ENCODE measurements at regions of chr20 and their contacts with region 1.

Region 1: GRCh38 chr20:2651772-2652723 is at the start of gene NOP56:
- DNase-seq: peak; percentile 68
- H3K4me3 ChIP-seq: peak within 1 kb of the TSS; percentile 99
- H3K27ac ChIP-seq: peak within 1 kb of the TSS; percentile 78
- H3K27me3 ChIP-seq: no peaks in the 10 kb centered on the region
- CTCF ChIP-seq: no peak
- polyA plus RNA-seq, gene NOP56: 126 and 142 TPM in 2 replicates

Region 2: DNA sequence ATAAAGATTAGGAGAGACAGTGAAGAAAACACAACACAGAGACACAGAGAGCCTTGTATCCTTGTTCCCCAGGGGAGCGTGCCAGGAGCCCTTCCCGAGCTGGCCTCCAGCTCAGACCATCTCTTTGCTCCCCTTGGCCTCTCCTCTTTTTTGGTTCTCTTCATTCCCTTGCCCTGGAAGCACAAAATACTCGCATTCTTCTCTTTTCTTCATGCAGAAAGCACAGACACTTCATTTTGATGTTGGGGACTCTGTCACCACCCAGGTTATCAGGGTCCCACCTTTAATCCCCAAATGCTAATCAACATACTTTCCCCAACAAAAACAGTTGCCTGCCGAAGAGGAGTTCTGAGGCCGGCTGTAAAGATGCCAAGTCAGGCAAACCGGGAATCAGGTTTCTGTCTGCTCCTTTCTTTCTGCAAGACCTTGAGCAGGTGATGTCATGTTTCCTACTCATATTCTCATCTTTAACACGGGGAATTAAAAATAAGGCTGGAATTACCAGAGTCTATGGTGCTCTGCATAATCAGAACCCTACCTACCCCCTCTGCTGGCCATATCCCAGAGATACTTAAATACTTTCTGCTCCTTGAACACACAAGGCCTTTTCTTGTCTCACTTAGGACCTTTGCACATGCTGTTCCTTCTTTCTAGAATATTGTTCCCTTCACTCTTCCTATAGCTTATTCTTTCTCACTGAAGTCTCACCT is 249.6 kb before region 1 on chr20:
- CTCF ChIA-PET with region 1: no interaction called
- POLR2A ChIA-PET with region 1: no interaction called
- DNase-seq: no peak
- H3K4me3 ChIP-seq: no peak overlapping the region
- H3K27ac ChIP-seq: no peak overlapping the region
- H3K27me3 ChIP-seq: no peaks in the 10 kb centered on the region
- CTCF ChIP-seq: peak; percentile 51

Region 3: GRCh38 chr20:2470423-2471193 is 181.4 kb before region 1 on chr20 and contains the start of gene SNRPB:
- CTCF ChIA-PET with region 1: interaction called, 3 read pairs
- POLR2A ChIA-PET with region 1: interaction called, 21 read pairs
- DNase-seq: peak; percentile 97
- H3K4me3 ChIP-seq: peak within 1 kb of the TSS; percentile 94
- H3K27ac ChIP-seq: peak within 1 kb of the TSS; percentile 96
- H3K27me3 ChIP-seq: no peaks in the 10 kb centered on the region
- CTCF ChIP-seq: no peak
- polyA plus RNA-seq, gene SNRPB: 137 and 142 TPM in 2 replicates

Region 4: DNA sequence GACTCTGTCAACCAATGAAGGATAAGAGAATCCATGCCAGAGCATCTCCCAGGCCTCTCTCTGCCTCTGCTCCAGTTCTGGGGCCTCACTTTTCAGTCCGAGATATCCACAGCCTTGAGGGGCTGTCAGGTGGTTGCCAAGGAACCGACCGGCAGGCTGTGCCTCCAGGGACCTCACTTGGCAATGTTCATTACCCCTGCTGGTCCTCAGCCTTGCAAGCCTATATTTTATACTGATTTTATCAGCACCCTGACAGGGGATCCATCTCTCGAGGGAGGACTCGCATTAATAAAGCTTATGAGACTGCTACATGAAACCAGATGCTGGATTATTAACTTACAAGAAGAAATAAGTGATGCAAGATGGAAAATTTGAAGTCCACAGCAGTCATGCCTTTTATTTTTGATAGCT is 75.7 kb before region 1 on chr20:
- CTCF ChIA-PET with region 1: no interaction called
- POLR2A ChIA-PET with region 1: no interaction called
- DNase-seq: no peak
- H3K4me3 ChIP-seq: no peak overlapping the region
- H3K27ac ChIP-seq: no peak overlapping the region
- H3K27me3 ChIP-seq: peaks cover 15% of the 10 kb centered on the region
- CTCF ChIP-seq: no peak

Region 5: DNA sequence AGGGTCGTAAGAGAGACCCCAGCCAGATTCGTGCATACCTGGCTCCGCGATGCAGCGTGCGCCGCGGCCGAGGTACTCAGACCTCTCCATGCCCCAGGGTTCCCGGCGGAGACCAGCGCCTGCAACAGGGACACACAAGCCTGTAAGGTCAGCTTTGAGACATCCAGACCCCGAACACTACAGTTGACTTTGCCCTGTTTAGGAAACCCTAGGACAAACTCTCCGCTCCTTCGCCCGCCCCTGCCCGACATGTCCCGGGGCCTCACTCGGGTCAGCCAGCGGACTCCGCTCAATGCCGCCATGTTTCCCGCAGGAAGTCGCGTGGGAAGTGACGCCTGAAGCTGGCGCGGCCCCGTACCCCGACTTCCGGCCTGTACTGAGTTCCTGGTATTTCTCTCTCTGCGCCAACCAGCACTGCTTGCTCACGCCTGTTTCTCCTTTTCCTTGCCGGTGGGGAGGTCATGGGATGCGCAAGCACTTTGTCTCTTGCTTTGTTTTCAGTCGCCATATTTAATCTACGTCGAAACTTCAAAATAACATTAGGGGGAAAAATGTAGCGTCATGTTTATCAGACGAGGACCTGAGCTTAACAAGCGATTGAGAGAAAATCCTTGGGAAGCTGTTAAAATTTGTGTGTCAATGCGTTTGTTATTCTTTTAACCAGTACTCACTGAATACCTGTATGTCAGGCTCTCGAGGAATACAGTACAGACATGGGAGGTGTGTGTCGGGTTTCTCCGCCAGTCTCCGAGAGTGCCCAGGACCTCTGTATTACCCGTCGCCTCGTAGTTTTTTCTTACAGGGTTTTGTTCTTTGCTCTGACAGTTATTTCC is 12.1 kb after region 1 on chr20 and contains the start of gene IDH3B:
- CTCF ChIA-PET with region 1: no interaction called
- POLR2A ChIA-PET with region 1: interaction called, 30 read pairs
- DNase-seq: peak; percentile 84
- H3K4me3 ChIP-seq: peak within 1 kb of the TSS; percentile 98
- H3K27ac ChIP-seq: peak within 1 kb of the TSS; percentile 93
- H3K27me3 ChIP-seq: peaks cover 8% of the 10 kb centered on the region
- CTCF ChIP-seq: no peak
- polyA plus RNA-seq, gene IDH3B: 113 and 116 TPM in 2 replicates

Region 6: GRCh38 chr20:2713285-2713684 is 61.2 kb after region 1 on chr20:
- CTCF ChIA-PET with region 1: no interaction called
- POLR2A ChIA-PET with region 1: no interaction called
- DNase-seq: no peak
- H3K4me3 ChIP-seq: no peak overlapping the region
- H3K27ac ChIP-seq: no peak overlapping the region
- H3K27me3 ChIP-seq: peaks cover 19% of the 10 kb centered on the region
- CTCF ChIP-seq: 0 out of 2 replicates have a peak, but pooled peaks have one; percentile 4

Measured in AG04450 (cell line).